ENCODE measurements at regions of chr4 and their contacts with region 1.

Region 1: GRCh38 chr4:105471566-105472176 is 2.2 kb downstream of the PPA2 start:
- DNase-seq: peak; percentile 48 to 62
- ATAC-seq: peak; percentile 41 to 63
- H3K4me3 ChIP-seq: peak overlapping the region; percentile 24 to 96 (median 62)
- H3K27ac ChIP-seq: peak overlapping the region; percentile 98 to 99 (median 98)
- H3K4me1 ChIP-seq: peaks cover 20 to 29% of the 10 kb centered on the region in 2 donors
- H3K27me3 ChIP-seq: no peaks in the 10 kb centered on the region
- CTCF ChIP-seq: peak; percentile 57 to 78 (median 64)
- POLR2A ChIP-seq: no peak

Region 2: DNA sequence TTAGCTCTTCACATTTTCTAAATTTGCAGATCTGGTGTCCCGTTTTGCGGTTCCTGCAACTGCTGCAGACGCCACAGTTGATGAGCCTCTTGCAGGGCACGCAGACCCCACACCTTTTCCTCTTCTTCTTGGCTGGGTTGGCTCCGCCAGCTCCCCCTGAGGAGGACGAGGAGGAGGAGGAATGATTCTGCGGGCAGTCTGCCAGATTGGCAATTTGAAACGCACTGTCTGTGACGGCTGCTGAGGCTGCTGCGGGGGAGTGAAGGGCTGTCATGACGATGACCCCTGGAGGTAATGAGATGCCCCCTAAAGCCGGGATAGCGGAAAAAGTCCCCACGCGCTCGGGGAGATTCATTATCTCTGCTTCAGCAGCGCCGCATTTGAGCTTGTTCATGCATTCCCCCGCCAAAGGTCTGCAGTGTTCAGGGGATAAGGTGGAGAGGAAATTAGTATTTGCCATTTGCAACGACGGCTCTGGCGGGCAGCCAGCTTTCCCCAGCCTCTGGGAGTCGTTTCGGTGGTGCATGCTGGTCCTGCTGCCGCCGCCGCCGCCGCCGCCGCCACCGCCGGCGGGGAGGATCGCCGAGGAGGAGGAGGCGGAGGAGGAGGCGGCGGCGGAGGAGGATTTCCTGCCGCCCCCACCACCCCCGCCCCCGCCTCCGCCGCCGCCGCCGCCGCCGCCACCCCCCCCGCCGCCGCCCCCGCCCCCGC is 980.7 kb before region 1 on chr4:
- in situ Hi-C with region 1: no loop called
- intact Hi-C with region 1: loop called (anchors 5 kb)
- DNase-seq: peak in 1 of 2 donors; percentile 25
- ATAC-seq: peak; percentile 21 to 38
- H3K4me3 ChIP-seq: peak overlapping the region; percentile 62 to 68 (median 64)
- H3K27ac ChIP-seq: peak overlapping the region in 3 of 4 donors; percentile 28 to 57 (median 42)
- H3K4me1 ChIP-seq: peaks cover 11 to 13% of the 10 kb centered on the region in 2 donors
- H3K27me3 ChIP-seq: peaks cover 7 to 26% (median 12%) of the 10 kb centered on the region in 3 donors
- CTCF ChIP-seq: no peak
- POLR2A ChIP-seq: no peak

Region 3: DNA sequence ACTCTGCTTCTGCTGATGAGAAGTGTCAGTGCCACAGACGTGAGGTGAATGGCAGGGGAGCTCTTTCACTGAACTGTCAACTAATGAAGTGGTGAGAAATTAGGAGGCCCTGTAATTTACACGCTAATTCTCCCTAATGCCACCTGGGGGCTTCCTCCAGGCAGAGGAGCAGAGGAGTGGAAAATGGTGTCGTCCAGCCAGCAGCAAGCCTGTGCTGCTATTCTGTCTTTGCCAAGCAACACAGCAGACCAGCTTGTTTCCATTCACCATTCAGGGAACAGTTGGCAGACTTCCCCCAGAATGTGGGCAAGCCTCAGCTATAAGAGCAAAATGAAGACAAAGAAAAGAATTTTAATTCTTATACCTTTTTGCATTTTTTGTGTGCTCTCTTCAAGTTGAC is 570.2 kb before region 1 on chr4:
- in situ Hi-C with region 1: no loop called
- intact Hi-C with region 1: no loop called
- DNase-seq: no peak
- ATAC-seq: no peak
- H3K4me3 ChIP-seq: no peak overlapping the region
- H3K27ac ChIP-seq: no peak overlapping the region
- H3K4me1 ChIP-seq: peaks cover 0 to 8% of the 10 kb centered on the region in 2 donors
- H3K27me3 ChIP-seq: no peaks in the 10 kb centered on the region
- CTCF ChIP-seq: no peak
- POLR2A ChIP-seq: no peak

Region 4: GRCh38 chr4:105140684-105141490 is 330.8 kb before region 1 on chr4:
- in situ Hi-C with region 1: loop called (anchors 5 to 10 kb)
- intact Hi-C with region 1: loop called (anchors 1 kb)
- DNase-seq: no peak
- ATAC-seq: peak; percentile 38 to 43
- H3K4me3 ChIP-seq: no peak overlapping the region
- H3K27ac ChIP-seq: no peak overlapping the region
- H3K4me1 ChIP-seq: no peaks in the 10 kb centered on the region
- H3K27me3 ChIP-seq: no peaks in the 10 kb centered on the region
- CTCF ChIP-seq: peak; percentile 31 to 69 (median 44)
- POLR2A ChIP-seq: no peak

Region 5: DNA sequence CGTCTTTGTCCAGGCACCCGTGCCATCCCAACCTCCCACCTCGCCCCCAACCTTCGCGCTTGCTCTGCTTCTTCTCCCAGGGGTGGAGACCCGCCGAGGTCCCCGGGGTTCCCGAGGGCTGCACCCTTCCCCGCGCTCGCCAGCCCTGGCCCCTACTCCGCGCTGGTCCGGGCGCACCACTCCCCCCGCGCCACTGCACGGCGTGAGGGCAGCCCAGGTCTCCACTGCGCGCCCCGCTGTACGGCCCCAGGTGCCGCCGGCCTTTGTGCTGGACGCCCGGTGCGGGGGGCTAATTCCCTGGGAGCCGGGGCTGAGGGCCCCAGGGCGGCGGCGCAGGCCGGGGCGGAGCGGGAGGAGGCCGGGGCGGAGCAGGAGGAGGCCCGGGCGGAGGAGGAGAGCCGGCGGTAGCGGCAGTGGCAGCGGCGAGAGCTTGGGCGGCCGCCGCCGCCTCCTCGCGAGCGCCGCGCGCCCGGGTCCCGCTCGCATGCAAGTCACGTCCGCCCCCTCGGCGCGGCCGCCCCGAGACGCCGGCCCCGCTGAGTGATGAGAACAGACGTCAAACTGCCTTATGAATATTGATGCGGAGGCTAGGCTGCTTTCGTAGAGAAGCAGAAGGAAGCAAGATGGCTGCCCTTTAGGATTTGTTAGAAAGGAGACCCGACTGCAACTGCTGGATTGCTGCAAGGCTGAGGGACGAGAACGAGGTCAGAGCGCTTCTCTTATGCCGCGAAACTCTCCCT is 325.2 kb before region 1 on chr4 and contains the start of gene TET2:
- in situ Hi-C with region 1: loop called in 3 of 4 experiments (anchors 5 kb)
- intact Hi-C with region 1: loop called (anchors 1 kb)
- DNase-seq: peak; percentile 54 to 70
- ATAC-seq: peak; percentile 69 to 75
- H3K4me3 ChIP-seq: peak within 1 kb of the TSS; percentile 76 to 93 (median 84)
- H3K27ac ChIP-seq: peak within 1 kb of the TSS; percentile 86 to 91 (median 88)
- H3K4me1 ChIP-seq: peaks cover 28 to 30% of the 10 kb centered on the region in 2 donors
- H3K27me3 ChIP-seq: no peaks in the 10 kb centered on the region
- CTCF ChIP-seq: peak in 2 of 5 experiments; percentile 13 to 21
- POLR2A ChIP-seq: peak; percentile 77 to 85
- total RNA-seq, gene TET2: 12.9 to 18.0 (median 16.4) TPM